ENCODE measurements at regions of chr9 and their contacts with region 1.

Region 1: GRCh38 chr9:28981129-28981528 is 1407.8 kb upstream of the C9orf72 start:
- DNase-seq: no peak
- ATAC-seq: no peak
- H3K4me3 ChIP-seq: no peak overlapping the region
- H3K4me3 Mint-ChIP-seq: no peak overlapping the region
- H3K27ac ChIP-seq: no peak overlapping the region
- H3K27ac Mint-ChIP-seq: no peak overlapping the region
- H3K4me1 ChIP-seq: no peaks in the 10 kb centered on the region
- H3K4me1 Mint-ChIP-seq: no peaks in the 10 kb centered on the region
- H3K27me3 ChIP-seq: no peaks in the 10 kb centered on the region
- H3K27me3 Mint-ChIP-seq: no peaks in the 10 kb centered on the region
- CTCF ChIP-seq: no peak

Region 2: GRCh38 chr9:28927711-28928110 is 53.4 kb before region 1 on chr9:
- CTCF ChIA-PET with region 1: no interaction called
- POLR2A ChIA-PET with region 1: no interaction called
- intact Hi-C with region 1: loop called in 1 of 2 experiments (anchors 5 kb)
- DNase-seq: no peak
- ATAC-seq: no peak
- H3K4me3 ChIP-seq: no peak overlapping the region
- H3K4me3 Mint-ChIP-seq: no peak overlapping the region
- H3K27ac ChIP-seq: no peak overlapping the region
- H3K27ac Mint-ChIP-seq: no peak overlapping the region
- H3K4me1 ChIP-seq: no peaks in the 10 kb centered on the region
- H3K4me1 Mint-ChIP-seq: no peaks in the 10 kb centered on the region
- H3K27me3 ChIP-seq: no peaks in the 10 kb centered on the region
- H3K27me3 Mint-ChIP-seq: no peaks in the 10 kb centered on the region
- CTCF ChIP-seq: no peak

Measured in CD4-positive, alpha-beta T cell (primary cell).